ENCODE measurements at regions of chr4 and their contacts with region 1.

Region 1: DNA sequence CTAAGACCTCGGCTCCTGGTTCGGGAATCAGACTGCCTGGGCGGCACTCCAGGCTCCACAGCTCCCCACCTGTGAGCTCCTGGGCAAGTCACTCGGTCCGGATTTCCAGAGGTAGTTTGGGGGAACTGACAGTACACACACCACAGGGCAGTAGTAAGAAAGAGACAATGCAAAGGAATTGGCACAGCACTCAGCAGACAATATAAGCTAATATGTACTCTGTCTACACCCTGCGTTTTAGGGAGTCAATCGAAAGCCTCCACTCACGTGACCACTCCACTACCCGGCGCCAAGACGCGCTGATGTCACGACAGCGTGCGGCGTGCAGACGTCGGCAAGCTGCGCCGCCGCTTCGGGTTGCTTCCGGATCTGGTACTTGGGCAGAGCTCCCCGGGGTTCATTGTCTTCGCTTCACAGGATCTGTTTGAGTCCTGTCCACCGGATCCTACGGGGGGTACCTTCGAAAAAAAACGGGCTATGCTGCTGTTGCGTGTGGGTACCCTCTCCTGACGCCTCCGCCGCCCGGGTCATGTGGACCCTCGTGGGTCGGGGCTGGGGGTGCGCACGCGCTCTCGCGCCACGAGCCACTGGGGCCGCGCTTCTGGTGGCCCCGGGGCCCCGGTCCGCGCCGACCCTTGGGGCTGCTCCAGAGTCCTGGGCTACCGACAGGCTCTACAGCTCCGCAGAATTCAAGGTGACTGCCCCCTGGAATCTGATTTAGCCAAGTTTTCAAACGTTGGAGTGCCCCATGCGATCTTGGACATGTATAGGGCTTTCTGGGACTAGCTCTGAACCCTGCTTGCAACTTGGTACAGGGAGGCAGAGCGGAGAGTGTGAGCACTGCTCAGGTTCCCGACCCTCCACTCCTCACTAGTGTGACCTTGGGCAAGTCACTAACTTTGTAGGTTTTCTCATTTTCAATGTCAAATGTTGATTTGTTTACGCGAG is at the start of gene GUF1:
- DNase-seq: peak; percentile 92
- H3K4me3 ChIP-seq: peak within 1 kb of the TSS; percentile 85
- H3K27ac ChIP-seq: peak within 1 kb of the TSS; percentile 57
- H3K4me1 ChIP-seq: peaks cover 23% of the 10 kb centered on the region
- CTCF ChIP-seq: no peak
- total RNA-seq, gene GUF1: 24.0 and 26.6 TPM in 2 replicates

Region 2: GRCh38 chr4:44701037-44701436 is 22.7 kb after region 1 on chr4:
- CTCF ChIA-PET with region 1: no interaction called
- POLR2A ChIA-PET with region 1: interaction called, 42 read pairs
- intact Hi-C with region 1: no loop called
- DNase-seq: no peak
- H3K4me3 ChIP-seq: no peak overlapping the region
- H3K27ac ChIP-seq: no peak overlapping the region
- H3K4me1 ChIP-seq: no peaks in the 10 kb centered on the region
- CTCF ChIP-seq: no peak

Region 3: DNA sequence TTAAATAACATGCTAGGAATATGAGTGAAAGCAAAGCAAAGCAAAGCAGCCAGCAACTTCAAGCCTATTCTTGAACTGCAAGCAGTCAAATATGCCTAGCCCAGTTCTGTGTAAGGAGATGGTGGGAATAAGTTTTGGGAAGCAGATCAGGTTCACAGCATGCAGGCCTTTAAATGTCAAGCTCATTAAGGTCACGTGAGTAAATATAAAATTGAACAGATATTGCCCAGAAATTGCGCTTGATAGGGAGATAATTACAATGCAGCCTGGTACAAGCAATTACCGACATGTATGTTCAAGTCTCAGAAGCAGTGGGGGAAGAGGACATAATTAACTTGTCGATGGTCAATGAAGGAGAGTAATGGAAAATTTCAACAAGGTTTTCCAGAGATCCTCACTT is 42.0 kb after region 1 on chr4:
- CTCF ChIA-PET with region 1: no interaction called
- POLR2A ChIA-PET with region 1: interaction called, 16 read pairs
- intact Hi-C with region 1: no loop called
- DNase-seq: no peak
- H3K4me3 ChIP-seq: no peak overlapping the region
- H3K27ac ChIP-seq: no peak overlapping the region
- H3K4me1 ChIP-seq: peaks cover 8% of the 10 kb centered on the region
- CTCF ChIP-seq: no peak

Region 4: GRCh38 chr4:44726262-44726871 is 48.0 kb after region 1 on chr4 and contains the start of gene GNPDA2:
- CTCF ChIA-PET with region 1: no interaction called
- POLR2A ChIA-PET with region 1: interaction called, 16 read pairs
- intact Hi-C with region 1: loop called (anchors 1 kb)
- DNase-seq: peak; percentile 91
- H3K4me3 ChIP-seq: peak within 1 kb of the TSS; percentile 90
- H3K27ac ChIP-seq: peak within 1 kb of the TSS; percentile 27
- H3K4me1 ChIP-seq: peaks cover 14% of the 10 kb centered on the region
- CTCF ChIP-seq: peak; percentile 39; the same call in 1 of the 2 replicates
- total RNA-seq, gene GNPDA2: 9.1 and 10.1 TPM in 2 replicates

Region 5: GRCh38 chr4:44777115-44777514 is 98.7 kb after region 1 on chr4:
- CTCF ChIA-PET with region 1: no interaction called
- POLR2A ChIA-PET with region 1: no interaction called
- intact Hi-C with region 1: no loop called
- DNase-seq: no peak
- H3K4me3 ChIP-seq: no peak overlapping the region
- H3K27ac ChIP-seq: no peak overlapping the region
- H3K4me1 ChIP-seq: no peaks in the 10 kb centered on the region
- CTCF ChIP-seq: no peak

Measured in OCI-LY7 (cell line).